ENCODE measurements at regions of chr4 and their contacts with region 1.

Region 1: GRCh38 chr4:169659716-169660670 is 39.6 kb downstream of the CLCN3 start:
- DNase-seq: peak; percentile 83
- ATAC-seq: peak; percentile 99
- H3K4me3 Mint-ChIP-seq: peak overlapping the region; percentile 80
- H3K27ac Mint-ChIP-seq: peak overlapping the region; percentile 98
- H3K4me1 Mint-ChIP-seq: peaks cover 37% of the 10 kb centered on the region
- H3K27me3 Mint-ChIP-seq: no peaks in the 10 kb centered on the region

Region 2: DNA sequence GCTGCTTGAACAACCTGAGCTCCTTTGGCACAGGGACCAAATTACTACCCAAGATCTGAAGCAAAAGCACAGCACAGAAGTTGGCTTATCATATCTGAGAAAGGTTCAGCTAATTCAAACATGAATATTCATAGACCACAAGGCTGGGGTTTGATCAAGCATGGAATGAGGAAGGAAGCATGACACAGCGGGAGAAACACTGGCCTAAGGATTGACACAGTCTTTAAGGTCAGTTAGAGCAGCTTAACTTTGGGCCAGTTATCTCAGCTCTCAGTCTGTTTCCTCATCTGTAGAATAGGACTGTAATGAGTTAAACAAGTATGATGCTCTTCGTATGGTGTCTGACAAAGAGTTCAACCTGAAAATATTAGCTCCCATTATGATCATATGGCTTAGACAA is 561.5 kb before region 1 on chr4:
- CTCF ChIA-PET with region 1: no interaction called
- POLR2A ChIA-PET with region 1: no interaction called
- intact Hi-C with region 1: no loop called
- DNase-seq: no peak
- ATAC-seq: no peak
- H3K4me3 Mint-ChIP-seq: no peak overlapping the region
- H3K27ac Mint-ChIP-seq: no peak overlapping the region
- H3K4me1 Mint-ChIP-seq: no peaks in the 10 kb centered on the region
- H3K27me3 Mint-ChIP-seq: no peaks in the 10 kb centered on the region

Region 3: GRCh38 chr4:169619959-169620879 is 39.8 kb before region 1 on chr4 and contains the start of gene CLCN3:
- CTCF ChIA-PET with region 1: interaction called, 9 read pairs
- POLR2A ChIA-PET with region 1: interaction called, 19 read pairs
- intact Hi-C with region 1: loop called (anchors 1 kb)
- DNase-seq: peak; percentile 93
- ATAC-seq: peak; percentile 72
- H3K4me3 Mint-ChIP-seq: peak within 1 kb of the TSS; percentile 93
- H3K27ac Mint-ChIP-seq: peak within 1 kb of the TSS; percentile 100
- H3K4me1 Mint-ChIP-seq: peaks cover 56% of the 10 kb centered on the region
- H3K27me3 Mint-ChIP-seq: no peaks in the 10 kb centered on the region
- total RNA-seq, gene CLCN3: 21.2 to 22.0 TPM

Region 4: GRCh38 chr4:169745291-169745690 is 85.3 kb after region 1 on chr4:
- CTCF ChIA-PET with region 1: no interaction called
- POLR2A ChIA-PET with region 1: no interaction called
- intact Hi-C with region 1: no loop called
- DNase-seq: no peak
- ATAC-seq: peak; percentile 26
- H3K4me3 Mint-ChIP-seq: no peak overlapping the region
- H3K27ac Mint-ChIP-seq: no peak overlapping the region
- H3K4me1 Mint-ChIP-seq: peaks cover 7% of the 10 kb centered on the region
- H3K27me3 Mint-ChIP-seq: no peaks in the 10 kb centered on the region

Region 5: GRCh38 chr4:170027181-170027829 is 367.3 kb after region 1 on chr4:
- CTCF ChIA-PET with region 1: no interaction called
- POLR2A ChIA-PET with region 1: no interaction called
- intact Hi-C with region 1: loop called (anchors 2 to 5 kb)
- DNase-seq: peak; percentile 94
- ATAC-seq: peak; percentile 77
- H3K4me3 Mint-ChIP-seq: peak overlapping the region; percentile 71
- H3K27ac Mint-ChIP-seq: peak overlapping the region; percentile 69
- H3K4me1 Mint-ChIP-seq: peaks cover 10% of the 10 kb centered on the region
- H3K27me3 Mint-ChIP-seq: peaks cover 15% of the 10 kb centered on the region